HEK293 (cell line): ENCODE measurements at regions of chr12 and their contacts with region 1.

Region 1: DNA sequence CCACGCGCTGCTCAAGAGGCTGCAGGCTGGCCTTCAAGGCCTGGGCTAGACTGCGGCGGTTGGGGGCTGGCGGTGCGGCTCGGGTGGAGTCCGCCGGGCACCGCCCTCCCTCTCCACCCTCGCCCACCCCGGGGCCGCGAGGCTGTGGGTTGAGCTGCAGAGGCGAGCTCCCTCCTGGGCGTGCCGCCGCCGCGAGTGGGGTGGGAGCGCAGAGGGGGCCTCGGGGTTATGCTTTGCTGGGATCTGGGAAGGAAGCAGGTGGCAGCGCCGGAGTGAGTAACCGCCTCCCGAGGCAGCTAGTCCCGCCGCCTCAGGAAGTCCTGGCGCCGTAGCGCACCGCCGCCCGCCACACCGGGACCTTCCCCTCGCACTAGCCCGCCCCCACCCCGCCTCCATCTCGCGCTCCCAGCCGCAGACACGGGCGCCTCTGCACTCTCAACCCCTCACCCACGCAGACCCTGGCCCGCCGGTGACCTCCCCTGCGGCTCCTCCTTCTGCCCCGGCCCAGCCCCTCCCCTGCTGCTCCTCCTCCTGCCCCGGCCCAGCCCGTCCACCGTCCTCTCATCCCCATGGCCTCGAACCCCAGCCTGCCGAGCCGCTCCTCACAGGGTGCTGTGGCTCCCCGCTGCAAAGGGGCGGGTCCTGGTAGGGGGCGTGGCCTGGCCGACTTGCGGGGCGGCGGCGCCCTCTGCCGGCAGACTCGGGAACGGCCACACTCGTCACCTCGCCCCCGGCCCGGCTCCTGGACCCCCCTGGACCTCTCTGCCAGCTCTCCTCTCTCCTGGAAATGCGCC is 16.6 kb downstream of the TAMALIN start:
- H3K4me3 ChIP-seq: peak overlapping the region; percentile 48
- H3K27ac ChIP-seq: no peak overlapping the region
- H3K4me1 ChIP-seq: peaks cover 2% of the 10 kb centered on the region
- CTCF ChIP-seq: peak; percentile 98

Region 2: GRCh38 chr12:51488281-51488680 is 535.1 kb before region 1 on chr12:
- CTCF ChIA-PET with region 1: no interaction called
- POLR2A ChIA-PET with region 1: no interaction called
- H3K4me3 ChIP-seq: no peak overlapping the region
- H3K27ac ChIP-seq: no peak overlapping the region
- H3K4me1 ChIP-seq: no peaks in the 10 kb centered on the region
- CTCF ChIP-seq: no peak

Region 3: DNA sequence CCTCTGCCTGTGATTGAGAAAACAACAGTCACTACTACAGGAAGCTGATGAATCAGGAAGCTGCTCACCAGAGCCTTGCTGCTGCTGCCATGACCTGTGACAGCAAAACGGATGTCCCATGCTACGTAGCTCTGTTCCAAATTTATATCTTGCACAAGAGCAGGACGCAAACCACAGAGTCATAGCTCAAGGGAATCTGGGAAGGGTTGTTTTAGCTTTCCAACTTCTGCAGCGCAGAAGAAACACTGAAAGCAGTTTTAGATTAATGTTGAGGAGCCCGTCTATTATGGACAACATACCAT is 137.4 kb before region 1 on chr12:
- CTCF ChIA-PET with region 1: interaction called, 10 read pairs
- POLR2A ChIA-PET with region 1: no interaction called
- H3K4me3 ChIP-seq: no peak overlapping the region
- H3K27ac ChIP-seq: no peak overlapping the region
- H3K4me1 ChIP-seq: no peaks in the 10 kb centered on the region
- CTCF ChIP-seq: no peak

Region 4: DNA sequence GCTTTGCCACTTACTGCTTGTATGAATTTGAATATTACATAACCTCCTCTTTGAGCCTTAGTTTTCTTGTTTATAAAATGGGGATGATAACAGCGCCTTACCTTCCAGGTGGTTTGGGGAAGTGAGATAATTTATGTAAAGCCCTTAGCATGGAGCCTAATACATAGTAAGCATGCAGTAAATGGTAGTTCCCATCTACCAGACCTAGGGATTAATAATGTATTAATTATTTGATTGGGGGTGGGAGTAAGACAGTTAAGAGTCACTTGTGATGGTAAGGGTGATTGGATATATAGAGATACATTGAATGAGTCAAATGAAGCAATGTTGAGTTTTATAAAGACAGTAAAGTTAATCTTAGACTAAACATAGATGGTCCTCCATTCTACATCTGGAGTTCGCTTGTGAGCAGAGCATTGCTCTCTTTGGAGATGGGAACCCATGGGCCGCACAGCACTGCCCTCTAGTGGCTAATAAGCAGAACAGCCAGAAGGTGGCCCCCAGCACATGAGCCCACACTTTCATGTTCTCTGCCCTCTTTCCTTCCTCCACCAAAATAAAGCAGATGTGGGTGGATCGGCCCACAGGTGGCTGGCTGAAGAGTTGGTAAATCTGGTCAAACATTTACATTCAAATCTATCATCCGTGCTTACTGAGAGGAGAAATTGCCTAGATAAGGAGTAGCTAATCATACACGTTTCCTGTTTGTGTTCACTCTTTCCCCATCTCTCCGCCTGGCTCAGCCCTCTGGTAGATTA is 43.1 kb before region 1 on chr12:
- CTCF ChIA-PET with region 1: interaction called, 349 read pairs
- POLR2A ChIA-PET with region 1: no interaction called
- H3K4me3 ChIP-seq: no peak overlapping the region
- H3K27ac ChIP-seq: no peak overlapping the region
- H3K4me1 ChIP-seq: no peaks in the 10 kb centered on the region
- CTCF ChIP-seq: peak; percentile 75

Region 5: GRCh38 chr12:52044261-52044983 is 21.0 kb after region 1 on chr12:
- CTCF ChIA-PET with region 1: interaction called, 76 read pairs
- POLR2A ChIA-PET with region 1: interaction called, 5 read pairs
- H3K4me3 ChIP-seq: no peak overlapping the region
- H3K27ac ChIP-seq: no peak overlapping the region
- H3K4me1 ChIP-seq: no peaks in the 10 kb centered on the region
- CTCF ChIP-seq: no peak

Region 6: GRCh38 chr12:52082988-52083637 is 59.7 kb after region 1 on chr12:
- CTCF ChIA-PET with region 1: interaction called, 794 read pairs
- POLR2A ChIA-PET with region 1: interaction called, 12 read pairs
- H3K4me3 ChIP-seq: no peak overlapping the region
- H3K27ac ChIP-seq: no peak overlapping the region
- H3K4me1 ChIP-seq: no peaks in the 10 kb centered on the region
- CTCF ChIP-seq: peak; percentile 85

Region 7: GRCh38 chr12:52139552-52140062 is 116.2 kb after region 1 on chr12:
- CTCF ChIA-PET with region 1: interaction called, 17 read pairs
- POLR2A ChIA-PET with region 1: no interaction called
- H3K4me3 ChIP-seq: no peak overlapping the region
- H3K27ac ChIP-seq: no peak overlapping the region
- H3K4me1 ChIP-seq: no peaks in the 10 kb centered on the region; the same call in 1 of the 2 replicates
- CTCF ChIP-seq: peak; percentile 59

Region 8: DNA sequence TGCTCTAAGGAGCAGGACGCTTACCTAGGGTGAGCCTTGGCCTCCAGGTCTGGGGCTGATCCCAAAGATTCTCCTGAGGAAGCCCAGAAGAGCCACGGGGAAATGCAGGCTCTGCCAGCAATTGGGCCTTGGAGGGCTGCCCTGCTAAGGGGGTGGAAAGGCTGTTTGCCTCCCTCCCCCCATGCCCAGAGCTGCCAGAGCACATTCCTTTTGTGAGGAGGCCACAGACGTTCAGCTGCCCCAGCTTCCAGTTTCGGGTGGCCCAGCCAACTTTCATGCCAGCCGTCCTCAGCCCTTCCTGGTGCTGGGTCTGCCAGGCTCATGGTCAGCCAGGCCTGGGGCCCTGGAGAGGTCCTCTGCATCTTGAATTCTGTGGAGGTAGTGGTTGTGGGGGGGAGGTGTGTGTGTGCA is 225.7 kb after region 1 on chr12:
- CTCF ChIA-PET with region 1: no interaction called
- POLR2A ChIA-PET with region 1: no interaction called
- H3K4me3 ChIP-seq: no peak overlapping the region
- H3K27ac ChIP-seq: no peak overlapping the region
- H3K4me1 ChIP-seq: peaks cover 13% of the 10 kb centered on the region
- CTCF ChIP-seq: no peak